Caco-2 (cell line): ENCODE measurements at regions of chr9 and their contacts with region 1.

Region 1: GRCh38 chr9:122904823-122905710 is at the start of gene RC3H2:
- DNase-seq: peak; percentile 99 to 100
- H3K4me3 ChIP-seq: peak within 1 kb of the TSS; percentile 70
- H3K4me3 Mint-ChIP-seq: peak within 1 kb of the TSS; percentile 86
- H3K27ac Mint-ChIP-seq: peak within 1 kb of the TSS; percentile 90
- H3K4me1 ChIP-seq: no peaks in the 10 kb centered on the region; the same call in 1 of the 2 replicates
- H3K4me1 Mint-ChIP-seq: no peaks in the 10 kb centered on the region
- H3K27me3 ChIP-seq: no peaks in the 10 kb centered on the region
- H3K27me3 Mint-ChIP-seq: no peaks in the 10 kb centered on the region
- CTCF ChIP-seq: no peak
- total RNA-seq, gene RC3H2: 53.8 and 55.5 TPM in 2 replicates

Region 2: GRCh38 chr9:122754825-122755224 is 150.2 kb before region 1 on chr9:
- CTCF ChIA-PET with region 1: no interaction called
- POLR2A ChIA-PET with region 1: no interaction called
- intact Hi-C with region 1: no loop called
- DNase-seq: no peak
- H3K4me3 ChIP-seq: no peak overlapping the region
- H3K4me3 Mint-ChIP-seq: no peak overlapping the region
- H3K27ac Mint-ChIP-seq: no peak overlapping the region
- H3K4me1 ChIP-seq: no peaks in the 10 kb centered on the region
- H3K4me1 Mint-ChIP-seq: no peaks in the 10 kb centered on the region
- H3K27me3 ChIP-seq: no peaks in the 10 kb centered on the region
- H3K27me3 Mint-ChIP-seq: peaks cover 3% of the 10 kb centered on the region
- CTCF ChIP-seq: no peak

Region 3: GRCh38 chr9:122846371-122846940 is 58.6 kb before region 1 on chr9:
- CTCF ChIA-PET with region 1: no interaction called
- POLR2A ChIA-PET with region 1: no interaction called
- intact Hi-C with region 1: no loop called
- DNase-seq: no peak
- H3K4me3 ChIP-seq: no peak overlapping the region
- H3K4me3 Mint-ChIP-seq: no peak overlapping the region
- H3K27ac Mint-ChIP-seq: no peak overlapping the region
- H3K4me1 ChIP-seq: no peaks in the 10 kb centered on the region
- H3K4me1 Mint-ChIP-seq: no peaks in the 10 kb centered on the region
- H3K27me3 ChIP-seq: no peaks in the 10 kb centered on the region
- H3K27me3 Mint-ChIP-seq: no peaks in the 10 kb centered on the region
- CTCF ChIP-seq: no peak

Region 4: GRCh38 chr9:122931226-122932121 is 26.4 kb after region 1 on chr9 and contains the start of gene ZBTB26:
- CTCF ChIA-PET with region 1: no interaction called
- POLR2A ChIA-PET with region 1: interaction called, 6 read pairs
- intact Hi-C with region 1: loop called (anchors 2 kb)
- DNase-seq: peak; percentile 93 to 96
- H3K4me3 ChIP-seq: peak within 1 kb of the TSS; percentile 74
- H3K4me3 Mint-ChIP-seq: no peak within 1 kb of the TSS
- H3K27ac Mint-ChIP-seq: no peak within 1 kb of the TSS
- H3K4me1 ChIP-seq: no peaks in the 10 kb centered on the region; the same call in 1 of the 2 replicates
- H3K4me1 Mint-ChIP-seq: peaks cover 9% of the 10 kb centered on the region
- H3K27me3 ChIP-seq: no peaks in the 10 kb centered on the region
- H3K27me3 Mint-ChIP-seq: no peaks in the 10 kb centered on the region
- CTCF ChIP-seq: no peak
- total RNA-seq, gene ZBTB26: 8.7 and 10.3 TPM in 2 replicates

Region 5: DNA sequence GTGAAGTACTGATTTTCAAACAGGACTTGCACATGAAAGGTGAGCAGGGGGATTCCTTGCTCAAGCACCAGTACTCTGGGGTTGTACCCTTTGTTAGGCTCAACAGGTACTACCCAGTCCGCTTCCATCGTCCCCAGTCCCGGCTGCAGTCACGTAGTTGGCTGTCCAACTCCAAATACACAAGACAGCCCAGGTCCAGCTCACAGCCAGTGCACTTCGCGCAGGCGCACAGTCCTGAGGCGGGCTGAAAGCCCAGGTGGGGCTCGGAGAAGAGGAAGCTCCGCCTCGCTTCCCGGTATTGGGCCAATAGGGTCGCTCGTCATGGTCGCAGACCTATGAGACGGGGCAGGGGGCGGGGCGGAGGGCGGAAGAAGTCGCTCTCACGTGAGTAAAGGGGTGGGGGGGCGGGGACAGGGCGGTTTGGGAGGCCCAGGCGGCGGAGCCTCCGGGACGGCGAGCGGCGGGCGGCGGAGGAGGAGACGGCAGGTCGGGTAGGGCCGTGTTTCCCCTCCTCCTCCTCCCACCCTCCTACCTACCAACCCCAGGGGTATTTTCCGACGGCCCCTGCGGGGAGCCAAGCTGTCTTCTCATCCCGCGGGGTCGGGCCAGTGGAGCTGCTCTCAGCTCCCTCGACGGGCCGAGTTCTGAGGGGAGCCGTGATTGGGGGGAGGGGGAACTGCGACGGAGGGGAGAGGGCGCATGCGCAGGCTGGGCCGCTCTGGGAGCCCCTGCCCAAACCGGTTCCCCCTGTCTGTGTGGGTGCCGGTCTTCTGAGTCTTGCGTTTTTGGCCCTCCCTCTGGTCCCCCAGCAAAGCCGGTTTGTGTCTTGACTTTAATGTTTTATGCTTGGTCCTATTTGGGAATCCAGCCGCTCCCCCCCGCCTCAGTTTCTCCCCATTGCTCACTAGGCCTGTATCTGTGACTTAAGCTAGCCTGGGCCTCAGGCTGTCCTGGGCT is 35.8 kb after region 1 on chr9 and contains the start of gene RABGAP1:
- CTCF ChIA-PET with region 1: no interaction called
- POLR2A ChIA-PET with region 1: interaction called, 19 read pairs
- intact Hi-C with region 1: loop called (anchors 1 kb)
- DNase-seq: peak; percentile 98 to 99
- H3K4me3 ChIP-seq: peak within 1 kb of the TSS; percentile 80
- H3K4me3 Mint-ChIP-seq: peak within 1 kb of the TSS; percentile 94
- H3K27ac Mint-ChIP-seq: peak within 1 kb of the TSS; percentile 87
- H3K4me1 ChIP-seq: peaks cover 9% of the 10 kb centered on the region; the same call in 1 of the 2 replicates
- H3K4me1 Mint-ChIP-seq: peaks cover 14% of the 10 kb centered on the region
- H3K27me3 ChIP-seq: no peaks in the 10 kb centered on the region
- H3K27me3 Mint-ChIP-seq: no peaks in the 10 kb centered on the region
- CTCF ChIP-seq: no peak
- total RNA-seq, gene RABGAP1: 52.1 and 55.4 TPM in 2 replicates